Heart left ventricle (tissue), 16 donors: ENCODE measurements at regions of chr2 and their contacts with region 1.

Region 1: DNA sequence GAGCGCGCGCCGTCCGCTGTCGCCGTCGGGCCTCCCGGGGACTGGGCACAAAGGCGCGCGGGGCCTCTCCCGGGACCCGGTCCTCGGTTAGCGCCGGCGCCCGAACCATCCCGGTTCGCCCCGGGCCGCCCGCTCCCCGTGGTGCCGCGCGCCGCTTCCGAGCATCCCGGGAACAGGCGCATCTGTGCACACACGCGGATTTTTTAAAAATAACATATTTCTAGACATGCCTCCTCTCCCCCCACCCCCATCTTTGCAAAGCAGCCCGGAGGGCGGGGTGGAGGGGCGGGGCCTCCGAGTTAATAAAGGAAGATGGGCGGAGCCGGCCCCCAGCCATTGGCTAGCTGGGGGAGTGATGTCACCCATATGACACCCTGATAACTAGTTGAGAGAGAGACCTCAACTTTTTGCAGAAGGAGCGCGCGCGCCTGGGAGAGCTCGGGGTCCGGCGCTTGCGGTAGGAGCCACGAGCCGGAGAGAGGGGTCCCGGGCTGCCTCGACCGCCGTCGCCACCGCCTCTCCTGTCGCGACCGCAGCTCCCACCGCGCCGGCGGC is at the start of gene SOX11:
- DNase-seq: peak in 3 of 5 donors; percentile 56 to 81 (median 57)
- ATAC-seq: peak; percentile 64 to 84 (median 73)
- H3K4me3 ChIP-seq: peak within 1 kb of the TSS; percentile 3 to 51 (median 42)
- H3K27ac ChIP-seq: peak within 1 kb of the TSS in 3 of 12 donors; percentile 3 to 80 (median 42)
- H3K4me1 ChIP-seq: peaks cover 2 to 48% (median 17%) of the 10 kb centered on the region in 12 donors
- H3K27me3 ChIP-seq: peaks cover 46 to 82% (median 58%) of the 10 kb centered on the region in 9 donors
- CTCF ChIP-seq: no peak
- POLR2A ChIP-seq: peak in 1 of 2 donors; percentile 69
- total RNA-seq, gene SOX11: 0.48 to 5.6 (median 1.5) TPM

Region 2: GRCh38 chr2:4981014-4981413 is 711.0 kb before region 1 on chr2:
- intact Hi-C with region 1: loop called in 1 of 10 experiments (anchors 10 kb)
- DNase-seq: no peak
- ATAC-seq: no peak
- H3K4me3 ChIP-seq: no peak overlapping the region
- H3K27ac ChIP-seq: no peak overlapping the region
- H3K4me1 ChIP-seq: no peaks in the 10 kb centered on the region
- H3K27me3 ChIP-seq: no peaks in the 10 kb centered on the region
- CTCF ChIP-seq: no peak
- POLR2A ChIP-seq: no peak

Region 3: GRCh38 chr2:4992226-4992625 is 699.8 kb before region 1 on chr2:
- intact Hi-C with region 1: loop called in 3 of 10 experiments (anchors 10 kb)
- DNase-seq: no peak
- ATAC-seq: peak in 2 of 4 donors; percentile 45 to 66
- H3K4me3 ChIP-seq: no peak overlapping the region
- H3K27ac ChIP-seq: no peak overlapping the region
- H3K4me1 ChIP-seq: no peaks in the 10 kb centered on the region
- H3K27me3 ChIP-seq: peaks cover 0 to 4% (median 0%) of the 10 kb centered on the region in 9 donors
- CTCF ChIP-seq: peak in 9 of 12 donors; percentile 8 to 55 (median 29)
- POLR2A ChIP-seq: no peak

Region 4: GRCh38 chr2:5391362-5391761 is 300.7 kb before region 1 on chr2:
- intact Hi-C with region 1: loop called in 1 of 10 experiments (anchors 5 kb)
- DNase-seq: peak; percentile 37 to 80 (median 73)
- ATAC-seq: peak; percentile 67 to 90 (median 84)
- H3K4me3 ChIP-seq: no peak overlapping the region
- H3K27ac ChIP-seq: no peak overlapping the region
- H3K4me1 ChIP-seq: peaks cover 0 to 5% (median 0%) of the 10 kb centered on the region in 12 donors
- H3K27me3 ChIP-seq: no peaks in the 10 kb centered on the region
- CTCF ChIP-seq: no peak
- POLR2A ChIP-seq: no peak

Region 5: DNA sequence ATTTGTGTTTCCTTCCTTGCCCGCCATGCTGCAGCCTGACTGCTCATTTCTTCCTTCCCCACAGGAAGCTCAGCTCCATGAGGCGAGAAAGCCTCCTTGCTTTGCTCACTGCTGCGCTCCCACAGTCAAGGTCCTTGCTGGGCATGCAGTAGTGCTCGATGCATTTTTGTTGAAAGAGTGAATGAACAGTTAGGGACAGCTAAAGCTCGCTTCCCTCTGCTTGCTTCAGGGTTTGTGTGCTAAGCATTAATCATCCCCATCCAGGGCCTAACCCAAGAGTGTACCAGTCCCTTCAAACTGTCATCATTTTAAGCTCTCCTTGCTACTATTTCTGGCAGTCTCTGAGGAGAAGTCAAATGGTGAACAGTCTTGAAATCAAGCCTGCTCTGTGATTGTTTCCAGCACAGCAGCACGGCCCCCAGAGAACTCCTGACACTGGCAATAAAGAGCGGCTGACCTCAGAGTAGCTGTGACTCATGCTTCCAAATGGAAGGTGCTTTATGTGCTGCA is 171.5 kb before region 1 on chr2:
- intact Hi-C with region 1: loop called in 1 of 10 experiments (anchors 10 kb)
- DNase-seq: peak in 4 of 5 donors; percentile 39 to 74 (median 66)
- ATAC-seq: peak; percentile 96 to 98 (median 96)
- H3K4me3 ChIP-seq: no peak overlapping the region
- H3K27ac ChIP-seq: peak overlapping the region in 11 of 12 donors; percentile 33 to 84 (median 67)
- H3K4me1 ChIP-seq: peaks cover 0 to 20% (median 6%) of the 10 kb centered on the region in 12 donors
- H3K27me3 ChIP-seq: no peaks in the 10 kb centered on the region
- CTCF ChIP-seq: no peak
- POLR2A ChIP-seq: no peak

Region 6: DNA sequence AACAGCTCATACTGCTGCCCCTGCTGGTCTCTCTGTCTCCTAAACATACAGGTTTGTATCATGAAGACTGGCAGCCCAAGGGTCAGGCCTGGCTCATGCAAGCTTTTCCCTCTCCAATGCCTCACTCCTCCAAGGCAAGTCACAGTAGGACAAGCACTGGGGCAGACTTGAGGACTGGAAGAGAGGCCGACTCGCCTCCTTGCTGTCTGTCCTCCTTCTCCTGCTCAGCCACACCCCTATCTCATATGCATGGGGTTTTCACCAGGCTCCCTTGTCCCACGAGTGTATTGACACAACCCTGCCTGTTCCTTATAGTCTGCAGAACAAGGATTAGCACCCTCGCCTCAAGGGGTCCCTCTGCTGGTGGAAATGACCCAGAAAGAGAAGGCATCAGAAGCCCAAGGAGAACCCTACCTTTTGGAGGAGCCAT is 223.8 kb after region 1 on chr2:
- intact Hi-C with region 1: loop called in 7 of 10 experiments (anchors 2 to 10 kb)
- DNase-seq: no peak
- ATAC-seq: peak in 2 of 4 donors; percentile 19 to 32
- H3K4me3 ChIP-seq: no peak overlapping the region
- H3K27ac ChIP-seq: peak overlapping the region; percentile 45 to 91 (median 76)
- H3K4me1 ChIP-seq: peaks cover 0 to 21% (median 7%) of the 10 kb centered on the region in 12 donors
- H3K27me3 ChIP-seq: no peaks in the 10 kb centered on the region
- CTCF ChIP-seq: peak in 11 of 12 donors; percentile 10 to 46 (median 39)
- POLR2A ChIP-seq: no peak

Region 7: DNA sequence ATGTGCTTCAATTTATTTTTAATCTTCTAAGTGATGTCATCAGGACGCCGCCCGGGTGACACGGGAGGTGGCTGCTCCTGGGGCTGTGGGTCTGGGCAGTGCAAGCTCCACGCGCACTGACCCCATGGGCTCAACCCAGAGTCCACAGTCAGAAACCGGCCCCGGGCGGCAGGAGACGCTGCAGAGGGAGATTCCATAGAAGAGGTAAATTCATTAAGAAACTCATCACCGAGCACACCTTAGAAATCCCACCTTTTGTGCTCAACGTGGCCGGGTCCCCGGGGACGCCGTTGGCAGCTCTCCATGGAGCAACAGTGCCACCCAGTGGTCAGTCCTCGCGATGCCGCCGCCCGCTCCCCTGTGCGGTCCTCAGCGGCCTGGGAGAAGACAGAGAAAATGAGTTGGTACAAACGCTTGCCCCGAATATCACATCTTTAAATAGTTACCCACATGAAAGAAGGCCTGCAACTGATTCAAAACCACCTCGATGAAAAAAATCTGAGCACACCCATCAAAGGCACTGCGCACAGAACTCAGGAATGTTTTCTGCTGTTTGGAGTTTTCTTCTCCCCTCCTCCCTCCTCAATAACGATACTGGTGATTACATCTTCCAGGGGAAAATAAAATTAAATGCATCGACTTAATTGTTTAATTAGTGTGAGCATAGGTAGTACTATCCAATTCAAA is 1081.1 kb after region 1 on chr2:
- intact Hi-C with region 1: loop called in 1 of 10 experiments (anchors 10 kb)
- DNase-seq: peak; percentile 41 to 85 (median 55)
- ATAC-seq: peak; percentile 43 to 95 (median 86)
- H3K4me3 ChIP-seq: peak overlapping the region in 8 of 12 donors; percentile 15 to 40 (median 21)
- H3K27ac ChIP-seq: no peak overlapping the region
- H3K4me1 ChIP-seq: peaks cover 0 to 12% (median 4%) of the 10 kb centered on the region in 12 donors
- H3K27me3 ChIP-seq: peaks cover 0 to 26% (median 3%) of the 10 kb centered on the region in 9 donors
- CTCF ChIP-seq: peak; percentile 94 to 99 (median 97)
- POLR2A ChIP-seq: no peak